ENCODE measurements at regions of chr11 and their contacts with region 1.

Region 1: GRCh38 chr11:27705873-27706820 is 5.9 kb upstream of the BDNF start:
- DNase-seq: no peak
- ATAC-seq: no peak
- H3K4me3 ChIP-seq: no peak overlapping the region
- H3K27ac ChIP-seq: no peak overlapping the region
- H3K4me1 ChIP-seq: peaks cover 0 to 9% (median 7%) of the 10 kb centered on the region in 9 donors
- H3K27me3 ChIP-seq: peaks cover 0 to 46% (median 24%) of the 10 kb centered on the region in 7 donors
- CTCF ChIP-seq: peak; percentile 31 to 72 (median 60)

Region 2: DNA sequence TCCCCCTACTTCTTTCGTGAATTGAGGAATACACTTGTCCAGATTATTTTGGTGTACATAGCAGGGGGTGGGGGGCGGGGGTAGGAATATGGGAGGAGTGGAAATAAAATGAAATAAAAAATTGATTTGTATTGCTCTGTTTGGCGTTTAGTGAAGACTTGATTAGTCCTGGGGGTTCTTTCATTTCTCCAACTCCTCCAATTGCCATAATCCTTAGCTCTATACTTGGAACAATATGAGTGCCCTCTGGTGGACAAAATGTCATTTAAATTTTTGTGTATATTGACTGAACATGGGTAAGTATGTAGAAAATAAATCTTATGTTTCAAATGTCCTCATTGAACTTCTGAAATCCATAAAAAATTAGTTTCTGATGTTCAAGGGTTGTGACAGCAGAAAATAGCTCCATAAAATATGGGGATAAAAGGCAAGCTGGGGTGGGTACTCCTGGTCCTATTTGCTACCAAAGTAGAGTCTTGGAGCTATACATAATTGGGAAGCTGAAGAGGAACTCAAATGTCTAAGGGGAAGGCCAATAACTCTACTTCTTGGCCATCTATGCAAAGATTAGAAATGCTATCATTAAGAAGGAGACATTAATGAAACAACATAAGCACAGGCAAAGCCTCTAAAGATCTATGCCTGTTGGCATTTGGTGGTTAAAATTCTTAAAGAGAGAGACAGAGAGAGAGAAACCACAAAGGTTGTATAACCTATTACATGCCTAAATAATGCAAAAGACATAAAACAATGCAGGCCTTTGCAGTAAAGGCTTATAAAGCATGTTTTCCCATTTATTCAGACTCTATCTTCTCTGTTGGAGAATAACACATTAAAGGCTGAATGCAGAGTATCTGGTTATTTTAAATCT is 823.6 kb after region 1 on chr11:
- intact Hi-C with region 1: loop called in 3 of 10 experiments (anchors 10 kb)
- DNase-seq: no peak
- ATAC-seq: no peak
- H3K4me3 ChIP-seq: no peak overlapping the region
- H3K27ac ChIP-seq: no peak overlapping the region
- H3K4me1 ChIP-seq: no peaks in the 10 kb centered on the region
- H3K27me3 ChIP-seq: no peaks in the 10 kb centered on the region
- CTCF ChIP-seq: peak; percentile 16 to 64 (median 49)

Region 3: DNA sequence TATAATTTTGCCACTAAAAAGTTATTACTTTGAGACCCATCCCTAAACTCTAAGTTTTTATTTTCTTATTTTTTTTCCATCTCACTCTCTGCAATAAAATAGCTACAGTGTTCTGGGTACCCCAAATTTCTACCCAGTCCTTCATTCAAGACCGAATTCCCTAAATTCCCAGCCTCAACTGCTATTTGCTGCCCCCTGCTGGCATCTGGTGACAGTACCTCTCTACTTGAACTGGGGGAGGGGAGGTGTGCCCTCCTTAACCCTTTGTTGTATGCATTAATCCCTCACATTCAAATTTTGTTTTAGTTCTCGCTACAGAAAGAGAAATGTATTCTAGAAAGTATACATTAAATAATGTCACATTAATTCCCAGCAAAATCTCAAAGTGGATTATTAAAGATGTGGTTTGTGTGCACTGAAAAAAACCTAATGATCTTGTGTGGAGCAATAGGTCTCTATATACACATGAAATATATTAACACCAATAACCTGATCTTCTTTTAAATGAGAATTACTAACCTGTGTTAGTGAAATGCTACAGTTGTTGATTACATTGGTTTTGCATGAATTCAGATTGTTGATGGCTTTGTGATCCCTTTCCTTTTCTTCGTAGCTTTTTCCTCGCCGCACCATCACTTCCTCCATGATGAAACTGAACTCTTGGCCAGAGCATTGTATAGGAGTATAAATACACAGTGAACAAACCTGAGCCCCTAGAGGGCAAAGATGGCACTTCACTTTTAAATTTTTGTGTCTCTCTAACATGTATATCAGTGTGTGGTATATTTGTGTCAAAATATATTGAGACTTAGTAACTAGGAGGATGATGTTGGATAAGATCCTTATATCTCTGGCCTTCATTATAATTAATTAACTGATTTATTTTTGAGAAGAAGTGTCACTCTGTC is 992.0 kb after region 1 on chr11:
- intact Hi-C with region 1: loop called in 6 of 10 experiments (anchors 5 to 10 kb)
- DNase-seq: peak; percentile 39 to 49
- ATAC-seq: peak in 5 of 8 donors; percentile 34 to 67 (median 58)
- H3K4me3 ChIP-seq: no peak overlapping the region
- H3K27ac ChIP-seq: no peak overlapping the region
- H3K4me1 ChIP-seq: no peaks in the 10 kb centered on the region
- H3K27me3 ChIP-seq: no peaks in the 10 kb centered on the region
- CTCF ChIP-seq: peak; percentile 54 to 84 (median 74)

Measured in heart right ventricle (tissue), 16 donors.